PC-9 (cell line): ENCODE measurements at regions of chr7 and their contacts with region 1.

Region 1: GRCh38 chr7:121126801-121127534 is 138.5 kb downstream of the CPED1 start:
- DNase-seq: no peak
- H3K4me3 ChIP-seq: no peak overlapping the region
- H3K27ac ChIP-seq: no peak overlapping the region
- H3K4me1 ChIP-seq: no peaks in the 10 kb centered on the region
- H3K27me3 ChIP-seq: no peaks in the 10 kb centered on the region
- CTCF ChIP-seq: peak; percentile 66

Region 2: DNA sequence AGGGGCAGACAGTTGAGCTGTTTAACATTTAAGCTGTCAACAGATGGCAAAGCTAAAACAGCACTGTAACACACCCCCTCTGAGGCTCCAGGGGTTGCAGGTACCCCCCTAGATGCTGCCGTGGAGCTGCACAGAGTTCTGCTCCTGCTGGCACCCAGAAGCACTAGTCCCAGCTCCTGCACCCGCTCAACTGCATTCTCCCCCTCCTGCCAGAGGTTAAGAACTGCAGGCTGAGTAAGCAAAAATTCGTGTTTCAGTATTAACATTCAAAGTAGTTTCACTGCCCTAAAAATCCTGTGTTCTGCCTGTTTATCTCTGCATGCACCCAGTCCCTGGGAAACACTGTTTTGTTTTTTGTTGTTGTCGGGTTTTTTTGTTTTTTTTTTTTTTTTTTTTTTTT is 1644.8 kb before region 1 on chr7:
- CTCF ChIA-PET with region 1: interaction called, 18 read pairs
- POLR2A ChIA-PET with region 1: no interaction called
- intact Hi-C with region 1: no loop called
- DNase-seq: peak in 1 of 2 experiments; percentile 15
- H3K4me3 ChIP-seq: no peak overlapping the region
- H3K27ac ChIP-seq: no peak overlapping the region
- H3K4me1 ChIP-seq: no peaks in the 10 kb centered on the region
- H3K27me3 ChIP-seq: no peaks in the 10 kb centered on the region
- CTCF ChIP-seq: peak; percentile 50

Region 3: DNA sequence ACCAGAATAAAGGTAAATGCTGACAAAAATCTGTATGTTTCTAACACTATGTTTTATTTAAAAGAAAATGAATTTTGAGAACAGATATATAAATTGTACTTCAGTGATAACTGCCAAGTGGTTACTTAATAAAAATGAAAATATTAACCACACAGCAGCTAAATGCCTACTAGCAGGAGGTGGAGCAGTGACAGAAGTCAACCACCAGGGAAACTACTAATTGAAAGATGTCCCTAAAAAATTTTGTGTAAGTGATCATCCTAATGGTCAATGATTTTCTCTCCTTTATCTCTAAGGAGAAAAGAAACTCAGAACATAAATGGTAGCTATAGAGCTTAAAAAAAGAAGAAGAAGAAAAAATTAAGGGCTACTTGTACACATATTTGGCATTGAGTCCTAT is 224.7 kb after region 1 on chr7:
- CTCF ChIA-PET with region 1: no interaction called
- POLR2A ChIA-PET with region 1: no interaction called
- intact Hi-C with region 1: loop called (anchors 5 kb)
- DNase-seq: no peak
- H3K4me3 ChIP-seq: no peak overlapping the region
- H3K27ac ChIP-seq: no peak overlapping the region
- H3K4me1 ChIP-seq: no peaks in the 10 kb centered on the region
- H3K27me3 ChIP-seq: no peaks in the 10 kb centered on the region
- CTCF ChIP-seq: no peak

Region 4: DNA sequence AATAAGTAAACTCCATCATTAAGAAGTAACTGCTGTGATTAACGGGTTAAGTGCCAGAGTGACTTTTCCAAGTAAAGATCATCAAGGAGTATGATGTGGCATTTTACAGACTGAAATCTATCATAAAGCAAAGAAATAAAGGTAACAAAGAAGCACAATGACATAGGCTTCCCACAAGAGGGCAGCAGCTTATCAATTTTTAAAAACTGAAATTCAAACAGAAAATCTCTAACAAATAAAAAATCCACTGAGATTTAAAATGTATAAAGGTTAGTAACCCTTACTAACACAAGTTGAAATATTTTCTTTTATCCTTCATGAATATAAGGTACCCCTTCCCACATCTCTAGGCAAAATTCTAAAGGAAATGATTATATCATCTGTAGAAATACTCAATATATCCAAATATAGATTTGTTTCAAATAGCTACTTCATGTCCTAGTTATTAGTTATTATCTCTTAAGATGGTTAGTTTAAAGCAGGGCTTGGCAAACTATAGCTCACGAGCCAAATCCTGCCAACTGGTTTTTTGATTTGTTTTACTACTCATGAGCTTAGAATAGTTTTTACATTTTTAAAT is 240.0 kb after region 1 on chr7:
- CTCF ChIA-PET with region 1: interaction called, 3 read pairs
- POLR2A ChIA-PET with region 1: no interaction called
- intact Hi-C with region 1: loop called (anchors 5 kb)
- DNase-seq: peak; percentile 15 to 48
- H3K4me3 ChIP-seq: no peak overlapping the region
- H3K27ac ChIP-seq: peak overlapping the region; percentile 38
- H3K4me1 ChIP-seq: peaks cover 16% of the 10 kb centered on the region; the same call in 1 of the 2 replicates
- H3K27me3 ChIP-seq: no peaks in the 10 kb centered on the region
- CTCF ChIP-seq: peak; percentile 94